ENCODE measurements at regions of chr18 and their contacts with region 1.

Region 1: DNA sequence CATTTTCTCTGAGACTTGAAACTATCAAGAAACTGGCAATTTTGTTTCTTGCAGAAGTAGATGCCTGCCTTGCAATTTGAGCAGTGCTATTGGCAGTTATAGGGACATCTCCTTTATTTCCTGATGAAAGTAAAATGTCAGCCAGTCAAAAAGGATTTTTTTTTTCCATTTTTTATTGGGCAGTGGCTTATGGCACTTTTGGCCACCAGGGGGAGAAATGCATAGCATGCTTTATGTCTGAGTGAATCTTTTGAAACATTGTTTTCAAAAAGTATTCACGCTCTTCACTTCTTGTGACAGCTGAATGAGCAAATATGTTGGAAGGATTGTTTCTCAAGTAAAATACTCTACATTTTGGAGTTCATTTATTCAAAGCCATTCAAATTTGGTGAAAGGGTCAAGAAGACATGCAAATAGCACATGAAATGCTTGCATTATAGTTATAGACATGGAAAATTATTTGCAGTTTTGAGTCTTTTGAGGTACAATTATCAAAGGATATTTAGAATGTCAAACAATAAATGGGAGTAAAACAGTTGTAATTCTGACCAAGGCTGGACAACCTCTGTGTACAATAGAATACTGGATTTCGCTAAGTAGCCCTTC is 491.0 kb downstream of the CDH2 start:
- DNase-seq: peak; percentile 14
- ATAC-seq: no peak
- H3K4me3 ChIP-seq: no peak overlapping the region
- H3K27ac ChIP-seq: no peak overlapping the region
- H3K4me1 ChIP-seq: no peaks in the 10 kb centered on the region
- H3K27me3 ChIP-seq: no peaks in the 10 kb centered on the region
- CTCF ChIP-seq: peak; percentile 51
- EP300 ChIP-seq: no peak
- POLR2A ChIP-seq: no peak
- RAD21 ChIP-seq: no peak

Region 2: DNA sequence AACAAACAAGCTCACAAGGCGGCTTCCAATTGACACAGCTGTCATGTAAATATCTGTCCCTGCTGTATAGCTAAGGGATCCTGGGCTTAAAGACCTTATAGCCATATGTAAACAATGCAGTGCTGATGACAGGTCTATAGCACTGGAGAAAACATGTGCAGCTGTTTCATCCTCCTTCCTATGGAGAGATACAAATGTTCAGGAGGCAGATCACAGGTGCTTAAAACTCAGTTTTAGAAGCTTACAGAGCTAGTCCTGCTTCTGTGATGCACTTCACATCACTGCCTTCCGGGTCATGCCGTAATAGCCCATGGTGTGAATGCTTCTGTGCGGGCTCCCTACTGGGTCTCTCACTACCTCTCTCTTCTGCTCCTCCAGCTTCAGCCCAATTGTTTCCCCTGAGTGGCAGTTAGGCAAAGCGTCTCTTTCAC is 238.4 kb before region 1 on chr18:
- CTCF ChIA-PET with region 1: no interaction called
- POLR2A ChIA-PET with region 1: no interaction called
- in situ Hi-C with region 1: no loop called
- intact Hi-C with region 1: no loop called
- DNase-seq: no peak
- ATAC-seq: no peak
- H3K4me3 ChIP-seq: no peak overlapping the region
- H3K27ac ChIP-seq: no peak overlapping the region
- H3K4me1 ChIP-seq: no peaks in the 10 kb centered on the region
- H3K27me3 ChIP-seq: no peaks in the 10 kb centered on the region
- CTCF ChIP-seq: no peak
- EP300 ChIP-seq: no peak
- POLR2A ChIP-seq: no peak
- RAD21 ChIP-seq: no peak

Region 3: DNA sequence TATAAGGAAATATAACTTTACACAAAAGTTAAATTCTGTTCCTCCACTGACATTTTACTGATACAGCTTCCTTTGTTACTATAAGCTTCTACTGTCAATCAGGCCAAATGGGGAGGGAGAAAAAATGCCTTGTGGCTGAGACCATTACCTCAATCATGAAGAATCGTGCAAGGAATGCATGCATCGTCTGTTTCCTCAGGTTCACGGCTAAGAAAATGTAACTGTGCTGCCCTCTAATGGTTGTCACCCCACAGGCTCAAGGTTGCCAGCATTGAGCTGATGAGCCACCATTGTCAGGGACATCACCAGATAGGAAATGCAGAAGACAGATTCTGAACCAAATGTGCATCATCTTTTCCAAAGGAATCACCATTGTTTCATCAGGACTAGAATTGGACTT is 64.1 kb after region 1 on chr18:
- CTCF ChIA-PET with region 1: interaction called, 8 read pairs
- POLR2A ChIA-PET with region 1: no interaction called
- in situ Hi-C with region 1: no loop called
- intact Hi-C with region 1: loop called (anchors 1 kb)
- DNase-seq: peak; percentile 16
- ATAC-seq: peak; percentile 75
- H3K4me3 ChIP-seq: no peak overlapping the region
- H3K27ac ChIP-seq: no peak overlapping the region
- H3K4me1 ChIP-seq: no peaks in the 10 kb centered on the region
- H3K27me3 ChIP-seq: no peaks in the 10 kb centered on the region
- CTCF ChIP-seq: peak; percentile 62
- EP300 ChIP-seq: no peak
- POLR2A ChIP-seq: no peak
- RAD21 ChIP-seq: 0 out of 2 replicates have a peak, but pooled peaks have one; percentile 31

Region 4: DNA sequence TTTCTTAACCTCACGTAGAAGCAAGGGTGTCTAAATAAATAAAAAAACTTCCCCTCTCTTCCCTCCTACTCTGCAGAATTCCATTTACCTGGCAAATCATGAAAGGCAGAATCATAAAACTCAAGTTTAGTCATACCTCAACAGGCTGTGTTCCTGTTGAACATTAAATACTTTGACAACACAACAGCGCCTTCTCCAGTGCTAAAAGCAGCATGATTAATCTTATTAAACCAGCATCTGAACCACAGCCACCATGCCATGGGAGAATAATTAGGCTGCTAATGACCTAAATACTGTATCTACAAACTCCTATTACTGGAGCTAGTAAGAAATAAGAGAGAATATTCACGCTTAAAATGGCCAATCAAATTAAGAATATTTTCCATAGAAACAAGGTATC is 422.9 kb after region 1 on chr18:
- CTCF ChIA-PET with region 1: no interaction called
- POLR2A ChIA-PET with region 1: no interaction called
- in situ Hi-C with region 1: no loop called
- intact Hi-C with region 1: loop called (anchors 5 kb)
- DNase-seq: no peak
- ATAC-seq: no peak
- H3K4me3 ChIP-seq: no peak overlapping the region
- H3K27ac ChIP-seq: no peak overlapping the region
- H3K4me1 ChIP-seq: peaks cover 40% of the 10 kb centered on the region
- H3K27me3 ChIP-seq: no peaks in the 10 kb centered on the region
- CTCF ChIP-seq: 0 out of 2 replicates have a peak, but pooled peaks have one; percentile 25
- EP300 ChIP-seq: no peak
- POLR2A ChIP-seq: no peak
- RAD21 ChIP-seq: no peak

Measured in HepG2 (cell line).